CD8-positive, alpha-beta T cell (primary cell): ENCODE measurements at regions of chr18 and their contacts with region 1.

Region 1: DNA sequence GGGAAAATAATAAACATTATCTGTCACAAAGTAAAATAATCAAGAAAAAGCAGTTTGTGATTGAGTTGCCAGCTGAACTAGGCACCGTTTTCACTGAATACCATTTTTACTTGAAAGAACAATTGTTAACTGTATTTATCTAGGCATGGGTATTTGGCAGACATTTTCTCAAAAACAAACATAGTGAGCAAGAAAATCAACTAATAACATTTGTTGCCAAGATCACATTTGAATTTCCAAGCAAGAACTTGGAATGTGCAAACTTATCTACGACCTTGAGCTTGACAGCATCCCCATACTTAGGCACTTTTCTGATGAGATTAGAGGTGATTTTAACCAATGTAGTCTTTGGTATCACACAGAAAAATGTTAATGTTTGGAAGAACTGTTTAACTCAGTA is 16.7 kb downstream of the SS18 start:
- DNase-seq: no peak
- ATAC-seq: no peak
- H3K4me3 ChIP-seq: no peak overlapping the region
- H3K4me3 Mint-ChIP-seq: no peak overlapping the region
- H3K27ac ChIP-seq: no peak overlapping the region
- H3K27ac Mint-ChIP-seq: no peak overlapping the region
- H3K4me1 ChIP-seq: no peaks in the 10 kb centered on the region
- H3K4me1 Mint-ChIP-seq: peaks cover 55% of the 10 kb centered on the region
- H3K27me3 ChIP-seq: no peaks in the 10 kb centered on the region
- H3K27me3 Mint-ChIP-seq: no peaks in the 10 kb centered on the region
- CTCF ChIP-seq: no peak

Region 2: DNA sequence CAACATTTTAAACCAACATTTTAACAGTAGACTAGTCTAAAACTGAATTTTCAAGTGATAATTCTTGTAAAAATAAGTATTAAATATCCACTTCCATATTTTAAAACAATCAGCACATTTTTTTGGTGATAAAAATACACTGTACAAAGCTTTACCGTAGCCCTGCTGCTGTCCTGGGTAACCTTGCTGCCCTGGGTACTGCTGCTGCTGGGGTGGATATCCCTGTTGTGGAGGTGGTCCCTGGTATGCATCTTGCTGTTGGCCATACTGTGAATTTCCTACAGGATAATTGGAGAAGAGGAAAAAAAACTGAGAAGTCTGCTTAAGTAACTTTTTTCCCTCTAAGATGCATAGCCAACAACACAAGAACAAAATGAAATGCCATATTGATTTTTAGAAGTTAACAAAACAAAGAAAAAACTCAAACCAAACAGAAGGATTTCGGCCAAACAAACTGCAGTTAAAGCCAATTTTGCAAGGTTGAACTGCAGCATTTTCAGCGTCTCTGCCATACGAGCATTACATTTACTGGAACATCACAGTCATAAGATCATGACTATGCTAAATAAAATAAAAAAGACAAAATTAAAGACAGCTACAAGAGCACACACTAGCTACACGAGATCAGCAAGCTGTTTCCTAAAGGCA is 38.8 kb before region 1 on chr18:
- CTCF ChIA-PET with region 1: no interaction called
- POLR2A ChIA-PET with region 1: no interaction called
- intact Hi-C with region 1: loop called in 1 of 2 experiments (anchors 5 kb)
- DNase-seq: no peak
- ATAC-seq: no peak
- H3K4me3 ChIP-seq: no peak overlapping the region
- H3K4me3 Mint-ChIP-seq: no peak overlapping the region
- H3K27ac ChIP-seq: no peak overlapping the region
- H3K27ac Mint-ChIP-seq: no peak overlapping the region
- H3K4me1 ChIP-seq: no peaks in the 10 kb centered on the region
- H3K4me1 Mint-ChIP-seq: peaks cover 4% of the 10 kb centered on the region
- H3K27me3 ChIP-seq: no peaks in the 10 kb centered on the region
- H3K27me3 Mint-ChIP-seq: no peaks in the 10 kb centered on the region
- CTCF ChIP-seq: no peak

Region 3: DNA sequence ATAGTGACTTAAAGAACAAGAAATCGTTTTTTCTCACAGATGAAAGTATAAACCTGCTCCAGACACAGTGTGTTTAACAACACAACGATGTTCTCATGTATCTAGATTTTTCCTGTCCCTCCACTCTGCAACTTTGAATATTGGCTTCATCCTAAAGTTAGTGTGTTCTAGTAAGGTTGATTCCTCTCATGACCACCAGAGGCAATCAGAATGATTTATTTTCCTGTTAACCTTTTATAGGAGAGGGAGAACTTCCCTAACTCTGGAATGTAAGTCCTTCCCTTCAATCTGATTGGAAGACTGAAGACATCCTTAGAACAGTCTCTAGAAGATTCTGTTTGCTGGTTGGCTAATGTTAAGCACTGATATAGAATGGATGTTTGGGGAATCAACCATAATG is 111.5 kb after region 1 on chr18:
- CTCF ChIA-PET with region 1: no interaction called
- POLR2A ChIA-PET with region 1: no interaction called
- intact Hi-C with region 1: no loop called
- DNase-seq: no peak
- ATAC-seq: no peak
- H3K4me3 ChIP-seq: no peak overlapping the region
- H3K4me3 Mint-ChIP-seq: no peak overlapping the region
- H3K27ac ChIP-seq: no peak overlapping the region
- H3K27ac Mint-ChIP-seq: no peak overlapping the region
- H3K4me1 ChIP-seq: peaks cover 4% of the 10 kb centered on the region
- H3K4me1 Mint-ChIP-seq: peaks cover 14% of the 10 kb centered on the region
- H3K27me3 ChIP-seq: no peaks in the 10 kb centered on the region
- H3K27me3 Mint-ChIP-seq: no peaks in the 10 kb centered on the region
- CTCF ChIP-seq: no peak